Activated T-helper 1 cell treated with anti-CD3 and anti-CD28 coated beads, Interleukin-12 subunit alpha, Interleukin-12 subunit beta, Interleukin-2, Interleukin-4 antibody, amounts not matched to agents 30 ng/mL and 10 ng/mL and 1 ng/mL, durations not matched to agents 14 hours and 24 hours and 36 hours (primary cell): ENCODE measurements at regions of chr17 and their contacts with region 1.

Region 1: DNA sequence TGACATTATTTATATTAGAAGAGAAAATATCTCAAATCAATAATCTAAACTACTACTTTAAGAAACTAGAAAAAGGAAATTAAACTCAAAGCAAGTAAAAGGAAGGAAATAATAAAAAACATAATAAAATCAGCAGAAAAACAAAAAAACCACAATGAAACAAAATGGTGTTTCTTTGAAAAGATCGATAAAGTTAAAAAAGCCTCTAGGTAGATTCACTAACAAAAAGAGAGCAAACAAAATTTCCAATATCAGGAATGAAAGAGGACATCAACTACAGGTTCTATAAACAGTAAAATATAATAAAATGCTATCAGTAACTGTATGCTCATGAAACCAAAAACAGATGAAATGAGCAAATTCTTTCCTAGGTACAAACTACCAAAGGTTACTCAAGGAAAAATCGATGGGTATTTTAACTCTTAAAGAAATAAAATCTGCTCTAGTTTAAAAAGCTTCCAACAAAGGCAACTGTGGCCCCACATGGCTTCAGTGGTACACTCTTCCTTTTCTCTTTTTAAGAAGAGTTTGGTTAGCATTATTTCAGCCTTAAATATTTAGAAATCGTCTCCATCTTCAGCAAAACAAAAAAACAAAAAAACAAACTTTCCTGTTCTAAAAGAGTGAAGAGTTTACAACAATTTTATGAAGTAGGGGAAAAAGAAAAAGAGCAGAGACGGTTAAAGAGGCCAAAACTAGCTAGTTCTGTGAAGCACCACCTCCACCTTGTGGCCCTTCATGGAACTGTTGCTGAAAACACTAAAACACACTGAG is 102.2 kb downstream of the TRIM37 start:
- DNase-seq: peak; percentile 44
- H3K4me3 Mint-ChIP-seq: peak overlapping the region; percentile 46
- H3K27ac Mint-ChIP-seq: peak overlapping the region; percentile 61
- H3K4me1 Mint-ChIP-seq: peaks cover 22% of the 10 kb centered on the region
- H3K27me3 Mint-ChIP-seq: no peaks in the 10 kb centered on the region

Region 2: GRCh38 chr17:58337600-58338453 is 666.7 kb before region 1 on chr17:
- intact Hi-C with region 1: loop called (anchors 10 kb)
- DNase-seq: peak; percentile 92
- H3K4me3 Mint-ChIP-seq: peak overlapping the region; percentile 100
- H3K27ac Mint-ChIP-seq: peak overlapping the region; percentile 99
- H3K4me1 Mint-ChIP-seq: peaks cover 61% of the 10 kb centered on the region
- H3K27me3 Mint-ChIP-seq: peaks cover 2% of the 10 kb centered on the region

Region 3: DNA sequence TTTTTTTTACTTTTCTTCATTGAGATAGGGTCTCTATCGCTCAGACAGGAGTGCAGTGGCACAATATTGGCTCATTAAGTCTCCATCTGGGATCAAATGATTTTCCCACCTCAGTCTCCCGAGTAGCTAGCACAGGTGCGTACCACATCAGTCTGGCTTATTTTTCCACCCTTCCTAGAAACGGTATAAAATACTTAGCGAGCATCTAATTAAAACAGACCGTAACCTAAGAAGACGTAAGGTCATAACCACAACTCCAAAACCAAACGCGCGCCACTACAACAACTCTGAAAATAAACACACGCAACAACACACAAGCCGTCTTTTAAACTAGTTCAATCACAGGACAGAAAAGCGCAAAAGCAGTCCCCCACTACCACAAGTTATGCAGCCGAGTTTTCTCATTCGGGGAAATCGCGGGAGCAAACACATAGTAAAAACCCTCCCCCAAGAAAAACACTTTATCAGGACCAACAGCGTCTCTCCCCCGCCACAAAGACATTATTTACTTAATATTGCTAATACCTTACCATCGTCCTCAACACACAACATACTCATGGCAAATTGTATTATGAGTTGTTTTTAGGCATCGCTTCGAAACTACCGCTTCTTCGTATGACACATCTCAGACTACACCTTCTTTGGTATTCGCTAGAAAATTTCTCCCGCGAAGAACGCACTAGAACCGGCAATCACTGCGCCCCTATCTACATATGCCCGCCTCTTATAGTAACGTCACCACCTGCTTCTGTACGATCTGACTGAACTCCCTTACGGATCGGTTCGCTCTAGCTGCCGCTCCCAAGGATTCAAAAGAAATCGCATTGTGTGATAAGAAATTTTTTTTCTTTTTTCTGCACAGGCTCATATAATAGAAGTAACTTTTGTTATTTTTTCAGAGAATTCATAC is 345.5 kb before region 1 on chr17:
- intact Hi-C with region 1: loop called (anchors 1 kb)
- DNase-seq: peak; percentile 74
- H3K4me3 Mint-ChIP-seq: peak overlapping the region; percentile 63
- H3K27ac Mint-ChIP-seq: peak overlapping the region; percentile 97
- H3K4me1 Mint-ChIP-seq: peaks cover 25% of the 10 kb centered on the region
- H3K27me3 Mint-ChIP-seq: peaks cover 7% of the 10 kb centered on the region

Region 4: GRCh38 chr17:58710936-58711775 is 293.4 kb before region 1 on chr17:
- intact Hi-C with region 1: loop called (anchors 1 kb)
- DNase-seq: no peak
- H3K4me3 Mint-ChIP-seq: no peak overlapping the region
- H3K27ac Mint-ChIP-seq: no peak overlapping the region
- H3K4me1 Mint-ChIP-seq: peaks cover 18% of the 10 kb centered on the region
- H3K27me3 Mint-ChIP-seq: no peaks in the 10 kb centered on the region

Region 5: DNA sequence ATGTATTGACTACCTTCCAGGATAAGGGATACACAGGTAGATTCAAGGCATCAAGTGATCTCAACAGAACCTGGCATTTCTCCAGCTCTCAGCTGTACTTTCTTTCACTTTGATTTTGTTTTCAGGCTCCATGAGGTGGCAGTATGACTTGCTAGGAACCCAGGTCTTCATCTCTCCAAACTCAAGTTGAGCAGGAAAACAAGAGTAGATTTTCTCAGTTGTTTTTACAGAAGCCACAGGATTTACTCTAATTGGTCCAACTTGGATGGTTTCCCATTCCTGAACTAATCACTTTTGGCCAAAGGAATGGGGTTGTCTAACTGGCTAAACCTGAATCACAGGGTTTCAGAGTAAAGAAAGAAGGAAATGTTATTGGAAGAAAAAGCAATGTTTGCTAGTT is 44.5 kb before region 1 on chr17:
- intact Hi-C with region 1: loop called (anchors 2 kb)
- DNase-seq: no peak
- H3K4me3 Mint-ChIP-seq: no peak overlapping the region
- H3K27ac Mint-ChIP-seq: no peak overlapping the region
- H3K4me1 Mint-ChIP-seq: no peaks in the 10 kb centered on the region
- H3K27me3 Mint-ChIP-seq: no peaks in the 10 kb centered on the region